ENCODE measurements at regions of chr12 and their contacts with region 1.

Region 1: GRCh38 chr12:8038659-8039114 is 6.2 kb downstream of the FOXJ2 start:
- DNase-seq: peak; percentile 47
- ATAC-seq: peak; percentile 85
- H3K4me3 Mint-ChIP-seq: peak overlapping the region; percentile 75
- H3K27ac Mint-ChIP-seq: peak overlapping the region; percentile 72
- H3K4me1 Mint-ChIP-seq: peaks cover 45% of the 10 kb centered on the region
- H3K27me3 Mint-ChIP-seq: no peaks in the 10 kb centered on the region

Region 2: DNA sequence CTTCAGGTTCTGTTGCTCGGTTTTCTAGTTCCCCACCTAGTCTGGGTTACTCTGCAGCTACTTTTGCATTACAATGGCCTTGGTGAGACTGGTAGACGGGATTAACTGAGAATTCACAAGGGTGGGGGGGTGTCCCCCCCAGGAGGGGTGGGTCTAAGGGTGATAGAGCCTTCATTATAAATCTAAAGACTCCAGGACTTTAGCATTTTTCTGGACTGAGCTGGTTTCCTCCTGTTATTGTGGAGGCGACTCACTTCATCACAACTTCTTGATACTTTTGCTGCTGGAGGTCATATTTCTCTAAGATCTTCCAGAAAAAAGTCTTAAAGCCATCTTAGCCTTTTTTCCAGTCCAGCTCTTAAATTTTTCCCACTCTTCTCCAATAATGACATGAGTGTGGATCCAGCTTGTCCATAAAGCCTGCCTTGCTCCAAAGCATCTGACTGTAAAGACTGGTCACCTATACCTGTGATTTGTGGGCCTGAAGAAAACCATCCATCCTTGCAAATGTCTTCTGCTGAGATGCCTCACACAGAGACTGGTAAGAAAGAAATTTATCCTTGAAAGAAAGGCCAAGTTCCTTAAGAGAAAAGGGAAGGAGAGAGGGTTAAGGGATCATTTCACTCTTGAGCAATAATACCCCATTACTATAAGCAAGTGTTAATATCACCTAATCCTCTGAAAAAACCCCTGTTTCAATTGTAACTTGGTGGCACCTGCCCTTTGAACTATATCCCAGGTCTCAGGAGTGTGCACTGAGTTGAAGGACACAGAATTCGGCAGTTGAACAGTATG is 146.3 kb before region 1 on chr12:
- POLR2A ChIA-PET with region 1: no interaction called
- DNase-seq: no peak
- ATAC-seq: no peak
- H3K4me3 Mint-ChIP-seq: no peak overlapping the region
- H3K27ac Mint-ChIP-seq: no peak overlapping the region
- H3K4me1 Mint-ChIP-seq: no peaks in the 10 kb centered on the region
- H3K27me3 Mint-ChIP-seq: no peaks in the 10 kb centered on the region

Region 3: DNA sequence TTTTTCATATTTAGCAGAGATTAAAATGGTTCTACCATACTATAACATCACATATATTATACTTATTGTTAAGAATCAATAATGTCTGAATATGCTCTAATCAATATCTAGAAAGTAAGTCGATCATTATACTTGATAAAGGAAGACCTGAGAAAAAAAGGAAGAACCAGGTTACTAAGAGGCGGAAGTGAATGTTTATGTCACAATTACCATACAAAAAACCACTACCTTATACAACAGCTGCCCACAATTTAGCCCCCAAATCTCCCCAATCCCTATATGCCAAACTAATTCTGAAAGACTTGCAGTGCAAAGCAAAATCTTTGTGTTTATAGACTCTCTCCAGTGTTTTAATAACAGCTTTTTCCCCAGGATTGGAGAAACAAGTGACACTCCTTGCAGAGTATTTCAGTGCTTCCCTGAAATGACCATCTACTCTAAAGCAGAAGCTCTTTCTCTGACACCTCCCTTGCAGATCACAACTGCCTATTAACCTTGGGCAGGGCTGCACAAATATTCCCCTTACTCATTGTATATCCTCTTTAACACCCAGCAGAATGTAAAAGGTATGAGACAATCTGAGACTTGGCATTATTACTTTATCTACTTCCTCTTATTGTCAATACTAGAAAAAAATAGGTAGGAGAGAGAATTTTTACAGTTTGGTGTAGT is 90.0 kb before region 1 on chr12:
- POLR2A ChIA-PET with region 1: no interaction called
- DNase-seq: no peak
- ATAC-seq: no peak
- H3K4me3 Mint-ChIP-seq: no peak overlapping the region
- H3K27ac Mint-ChIP-seq: peak overlapping the region; percentile 68
- H3K4me1 Mint-ChIP-seq: peaks cover 8% of the 10 kb centered on the region
- H3K27me3 Mint-ChIP-seq: peaks cover 2% of the 10 kb centered on the region

Region 4: GRCh38 chr12:7966563-7966962 is 72.1 kb before region 1 on chr12:
- POLR2A ChIA-PET with region 1: no interaction called
- DNase-seq: no peak
- ATAC-seq: no peak
- H3K4me3 Mint-ChIP-seq: no peak overlapping the region
- H3K27ac Mint-ChIP-seq: no peak overlapping the region
- H3K4me1 Mint-ChIP-seq: peaks cover 38% of the 10 kb centered on the region
- H3K27me3 Mint-ChIP-seq: no peaks in the 10 kb centered on the region

Region 5: DNA sequence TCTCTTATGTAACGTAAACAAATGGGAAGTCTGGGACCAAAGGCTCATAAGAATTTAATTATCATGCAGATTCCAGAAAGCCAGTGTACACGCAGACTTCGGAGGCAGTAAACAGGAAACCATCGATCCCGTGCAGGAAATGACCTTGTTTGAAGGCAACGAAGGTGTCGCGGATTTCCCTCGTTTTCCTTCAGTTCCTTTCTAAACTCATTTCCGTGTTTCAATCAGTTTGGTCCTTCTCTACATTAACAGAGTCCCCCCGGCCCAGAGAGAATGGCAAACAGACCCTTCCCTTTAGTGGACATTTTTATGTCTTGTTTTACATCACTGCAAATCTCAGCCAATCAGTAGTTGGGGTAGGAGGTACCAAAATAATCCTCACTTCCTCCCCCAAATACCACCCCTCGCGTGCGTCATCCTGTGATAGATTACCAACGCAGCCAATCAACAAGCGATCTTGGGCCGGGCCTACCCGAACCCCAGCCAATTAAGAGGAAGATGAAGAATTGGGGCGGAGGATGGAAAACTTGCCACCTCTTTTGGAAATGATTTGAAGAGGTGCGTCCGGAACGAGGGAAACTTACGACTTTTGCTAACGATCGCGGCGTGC is 12.3 kb before region 1 on chr12:
- POLR2A ChIA-PET with region 1: interaction called, 11 read pairs
- DNase-seq: peak; percentile 85
- ATAC-seq: peak; percentile 95
- H3K4me3 Mint-ChIP-seq: peak overlapping the region; percentile 91
- H3K27ac Mint-ChIP-seq: peak overlapping the region; percentile 98
- H3K4me1 Mint-ChIP-seq: peaks cover 9% of the 10 kb centered on the region
- H3K27me3 Mint-ChIP-seq: peaks cover 3% of the 10 kb centered on the region